Right lobe of liver (tissue), 6 donors: ENCODE measurements at regions of chr9 and their contacts with region 1.

Region 1: DNA sequence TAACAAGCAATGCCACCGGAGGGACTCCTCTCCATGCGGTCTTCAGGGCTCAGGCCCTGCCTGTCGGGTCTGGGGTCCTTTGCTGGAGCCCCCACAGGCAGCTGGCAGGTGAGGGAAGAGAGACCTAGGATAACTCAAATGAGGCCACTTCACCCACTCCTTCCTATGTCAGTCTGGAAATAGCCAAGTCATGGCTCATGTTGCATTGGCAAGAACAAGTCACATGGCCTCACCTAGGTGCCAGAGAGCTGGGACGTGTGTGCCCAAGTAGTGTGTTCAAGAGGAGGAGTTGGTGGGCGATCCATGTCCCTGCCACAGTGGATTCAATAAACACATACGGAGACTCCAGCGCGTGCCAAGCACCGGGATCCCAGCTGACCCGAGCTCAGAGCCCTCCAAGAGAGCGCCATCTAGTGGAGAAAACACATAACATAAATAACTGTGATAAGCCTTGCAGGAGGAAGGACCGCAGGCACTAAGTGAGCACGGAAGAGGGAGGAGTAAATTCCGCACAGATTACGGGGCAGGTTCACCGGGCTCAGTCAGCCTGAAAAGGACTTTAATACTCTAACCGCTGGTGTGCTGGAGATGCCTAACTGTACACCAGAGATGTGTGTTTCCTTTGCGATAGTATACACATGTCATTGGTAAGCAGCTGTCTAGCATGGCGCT is 580.8 kb downstream of the CCDC171 start:
- DNase-seq: peak; percentile 38 to 64 (median 59)
- ATAC-seq: peak; percentile 91 to 97 (median 94)
- H3K4me3 ChIP-seq: no peak overlapping the region
- H3K27ac ChIP-seq: no peak overlapping the region
- H3K4me1 ChIP-seq: peaks cover 0 to 4% (median 0%) of the 10 kb centered on the region in 4 donors
- H3K27me3 ChIP-seq: no peaks in the 10 kb centered on the region
- CTCF ChIP-seq: peak; percentile 65 to 79 (median 69)
- POLR2A ChIP-seq: no peak

Region 2: GRCh38 chr9:15873569-15874177 is 260.0 kb before region 1 on chr9:
- intact Hi-C with region 1: loop called in 1 of 2 experiments (anchors 10 kb)
- DNase-seq: no peak
- ATAC-seq: peak; percentile 55 to 75 (median 68)
- H3K4me3 ChIP-seq: no peak overlapping the region
- H3K27ac ChIP-seq: no peak overlapping the region
- H3K4me1 ChIP-seq: no peaks in the 10 kb centered on the region
- H3K27me3 ChIP-seq: no peaks in the 10 kb centered on the region
- CTCF ChIP-seq: peak; percentile 65 to 77 (median 71)
- POLR2A ChIP-seq: no peak

Region 3: DNA sequence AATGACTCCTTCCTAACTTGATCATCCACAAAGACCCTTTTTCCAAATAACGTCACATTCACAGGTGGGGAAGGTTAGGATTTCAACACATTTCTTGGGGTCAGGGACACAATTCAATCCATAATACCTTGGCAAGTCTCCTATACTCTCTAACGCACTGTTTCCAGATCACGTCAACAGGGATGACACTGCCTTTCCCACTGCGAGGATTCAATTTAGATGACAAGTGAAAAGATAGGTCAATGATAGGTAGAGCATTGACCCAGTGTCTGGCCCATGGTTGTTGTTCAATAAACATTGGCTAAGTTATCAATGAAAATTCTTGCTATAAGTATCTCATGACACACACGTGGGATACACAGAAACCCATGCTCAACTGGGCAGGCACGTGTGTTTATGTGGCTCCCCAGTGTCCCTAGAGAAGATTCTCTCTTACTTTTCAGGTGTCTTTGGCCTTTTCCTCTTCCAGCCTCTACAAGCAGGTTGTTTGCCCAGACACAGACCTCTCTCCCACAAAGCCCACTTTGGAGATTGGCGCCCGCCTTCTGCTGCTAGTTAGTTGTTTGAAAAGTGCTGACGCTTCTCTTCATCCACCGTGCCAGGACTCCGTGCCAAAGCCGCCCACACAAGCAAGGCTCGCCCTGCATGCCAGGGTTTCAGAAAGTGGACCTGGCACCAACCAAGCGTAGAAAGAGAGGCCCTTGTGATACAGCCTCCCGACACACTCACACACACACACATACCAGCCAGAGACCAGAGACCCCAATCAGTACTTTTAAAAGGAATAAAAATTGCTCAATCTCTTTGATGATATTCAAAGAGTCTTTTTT is 142.3 kb after region 1 on chr9:
- intact Hi-C with region 1: no loop called
- DNase-seq: peak; percentile 83 to 88 (median 88)
- ATAC-seq: peak; percentile 81 to 92 (median 86)
- H3K4me3 ChIP-seq: no peak overlapping the region
- H3K27ac ChIP-seq: peak overlapping the region; percentile 62 to 74 (median 67)
- H3K4me1 ChIP-seq: peaks cover 0 to 15% (median 5%) of the 10 kb centered on the region in 4 donors
- H3K27me3 ChIP-seq: no peaks in the 10 kb centered on the region
- CTCF ChIP-seq: no peak
- POLR2A ChIP-seq: peak; percentile 39